CD4-positive, alpha-beta memory T cell (primary cell): ENCODE measurements at regions of chr6 and their contacts with region 1.

Region 1: DNA sequence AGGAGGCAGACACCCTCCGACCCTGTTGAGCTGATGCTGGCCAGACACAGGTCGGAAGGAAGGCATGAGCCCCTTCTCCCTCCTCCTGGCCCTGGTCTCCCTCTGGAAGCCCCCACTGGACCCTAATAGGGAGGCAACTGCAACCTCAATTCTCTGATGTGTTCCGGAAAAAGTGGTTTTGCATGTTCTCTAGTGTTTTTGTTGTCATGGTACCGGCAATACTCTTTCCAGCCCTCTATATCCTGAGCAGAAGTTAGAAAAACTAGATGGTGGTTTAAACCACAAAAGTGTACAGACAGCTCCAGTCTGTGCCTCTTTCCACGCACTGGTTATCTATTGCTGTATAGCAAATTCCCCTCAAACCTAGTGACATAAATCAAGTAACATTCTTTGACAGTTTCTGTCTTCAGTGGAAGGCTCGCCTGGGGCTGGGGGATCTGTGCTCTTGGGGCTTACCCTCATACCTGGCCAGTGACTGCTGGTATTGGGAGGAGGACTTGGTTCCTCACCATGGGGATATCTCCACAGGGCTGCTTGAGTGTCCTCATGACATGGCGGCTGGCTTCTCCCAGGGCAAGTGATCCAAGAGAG is 37.0 kb downstream of the SYTL3 start:
- DNase-seq: peak; percentile 84 to 92 (median 87)
- H3K4me3 ChIP-seq: peak overlapping the region in 1 of 2 donors; percentile 25
- H3K4me3 Mint-ChIP-seq: peak overlapping the region; percentile 53 to 91 (median 80)
- H3K27ac ChIP-seq: peak overlapping the region; percentile 85
- H3K27ac Mint-ChIP-seq: peak overlapping the region; percentile 98 to 100 (median 100)
- H3K4me1 ChIP-seq: peaks cover 65% of the 10 kb centered on the region
- H3K4me1 Mint-ChIP-seq: peaks cover 43 to 77% (median 58%) of the 10 kb centered on the region in 4 donors
- H3K27me3 ChIP-seq: no peaks in the 10 kb centered on the region
- H3K27me3 Mint-ChIP-seq: no peaks in the 10 kb centered on the region

Region 2: GRCh38 chr6:158595223-158595622 is 91.7 kb before region 1 on chr6:
- CTCF ChIA-PET with region 1: interaction called, 12 read pairs
- POLR2A ChIA-PET with region 1: no interaction called
- intact Hi-C with region 1: no loop called
- DNase-seq: peak in 4 of 5 donors; percentile 12 to 26 (median 21)
- H3K4me3 ChIP-seq: no peak overlapping the region
- H3K4me3 Mint-ChIP-seq: no peak overlapping the region
- H3K27ac ChIP-seq: no peak overlapping the region
- H3K27ac Mint-ChIP-seq: peak overlapping the region in 1 of 7 donors; percentile 52
- H3K4me1 ChIP-seq: no peaks in the 10 kb centered on the region
- H3K4me1 Mint-ChIP-seq: peaks cover 0 to 12% (median 2%) of the 10 kb centered on the region in 4 donors
- H3K27me3 ChIP-seq: no peaks in the 10 kb centered on the region
- H3K27me3 Mint-ChIP-seq: no peaks in the 10 kb centered on the region

Region 3: DNA sequence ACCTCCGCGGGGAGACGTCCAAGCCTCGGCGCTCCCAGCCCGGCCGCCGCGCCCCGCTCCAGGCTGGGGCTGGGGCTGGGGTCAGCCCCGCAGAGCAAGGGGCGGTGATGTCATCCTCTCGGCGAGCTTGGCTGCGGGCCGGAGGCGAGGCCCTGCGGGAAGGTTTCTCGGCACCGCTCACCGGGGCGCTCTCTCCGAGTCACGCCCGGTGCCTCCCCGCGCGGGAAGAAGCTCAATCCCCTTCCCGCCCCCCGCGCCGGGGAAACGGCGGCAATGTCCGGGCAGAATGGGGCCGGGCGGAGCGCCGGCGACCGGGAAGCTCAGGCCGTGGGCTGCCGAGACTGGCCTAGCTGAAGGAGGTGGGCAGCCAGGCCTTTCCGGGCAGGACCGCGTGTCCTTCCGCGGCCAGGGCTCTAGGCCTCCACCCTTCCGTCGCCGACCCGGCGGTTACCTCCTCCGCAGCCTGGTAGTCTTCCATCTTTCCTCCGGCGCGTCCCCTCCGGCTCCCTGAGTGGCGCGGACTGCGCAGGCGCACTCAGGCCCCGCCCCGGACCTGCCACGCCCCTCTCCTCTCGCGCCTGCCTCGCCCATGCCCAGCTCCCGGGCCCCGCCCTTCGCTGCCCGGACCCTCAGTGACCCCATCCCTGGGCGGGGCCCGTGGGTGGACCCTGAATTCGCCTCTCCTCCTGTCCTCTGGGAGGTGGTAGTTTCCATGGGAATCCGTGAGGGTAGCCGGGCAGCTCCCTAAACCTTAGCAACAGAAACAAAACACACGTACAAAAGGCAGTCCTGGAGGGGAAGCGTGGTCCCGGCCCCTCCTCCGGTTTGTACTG is 42.4 kb before region 1 on chr6 and contains the start of gene DYNLT1:
- CTCF ChIA-PET with region 1: interaction called, 34 read pairs
- POLR2A ChIA-PET with region 1: interaction called, 28 read pairs
- intact Hi-C with region 1: no loop called
- DNase-seq: peak; percentile 78 to 95 (median 88)
- H3K4me3 ChIP-seq: peak within 1 kb of the TSS; percentile 84 to 85
- H3K4me3 Mint-ChIP-seq: peak within 1 kb of the TSS; percentile 99 to 100 (median 99)
- H3K27ac ChIP-seq: peak within 1 kb of the TSS; percentile 96
- H3K27ac Mint-ChIP-seq: peak within 1 kb of the TSS; percentile 92 to 100 (median 99)
- H3K4me1 ChIP-seq: peaks cover 58% of the 10 kb centered on the region
- H3K4me1 Mint-ChIP-seq: peaks cover 46 to 82% (median 55%) of the 10 kb centered on the region in 4 donors
- H3K27me3 ChIP-seq: no peaks in the 10 kb centered on the region
- H3K27me3 Mint-ChIP-seq: no peaks in the 10 kb centered on the region
- total RNA-seq, gene DYNLT1: 78.8 to 90.4 TPM

Region 4: DNA sequence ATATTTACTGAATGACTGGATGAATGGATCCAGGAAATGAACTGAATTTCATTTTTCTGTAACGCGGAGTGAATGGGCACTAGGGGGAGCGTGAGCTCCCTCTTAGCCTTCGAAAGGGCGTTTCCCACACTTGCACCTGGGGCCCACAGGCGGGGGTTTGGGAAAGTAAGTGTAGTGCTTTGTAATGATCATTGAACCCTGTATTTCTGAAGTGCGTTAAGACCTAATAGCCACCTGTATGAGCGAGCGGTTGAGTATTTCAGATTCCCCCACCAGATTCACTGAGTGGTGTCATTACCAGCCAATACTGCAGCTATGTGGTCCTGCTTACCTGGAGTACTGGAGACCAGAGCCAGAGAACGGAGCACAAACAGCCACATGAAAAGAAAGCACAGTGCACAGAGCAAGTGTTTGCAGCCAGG is 26.5 kb before region 1 on chr6:
- CTCF ChIA-PET with region 1: interaction called, 220 read pairs
- POLR2A ChIA-PET with region 1: interaction called, 34 read pairs
- intact Hi-C with region 1: loop called (anchors 1 kb)
- DNase-seq: peak; percentile 61 to 70 (median 67)
- H3K4me3 ChIP-seq: no peak overlapping the region
- H3K4me3 Mint-ChIP-seq: peak overlapping the region in 6 of 8 donors; percentile 35 to 62 (median 48)
- H3K27ac ChIP-seq: no peak overlapping the region
- H3K27ac Mint-ChIP-seq: peak overlapping the region; percentile 35 to 93 (median 88)
- H3K4me1 ChIP-seq: peaks cover 28% of the 10 kb centered on the region
- H3K4me1 Mint-ChIP-seq: peaks cover 20 to 44% (median 30%) of the 10 kb centered on the region in 4 donors
- H3K27me3 ChIP-seq: no peaks in the 10 kb centered on the region
- H3K27me3 Mint-ChIP-seq: no peaks in the 10 kb centered on the region

Region 5: GRCh38 chr6:158704181-158704822 is 17.4 kb after region 1 on chr6:
- CTCF ChIA-PET with region 1: interaction called, 14 read pairs
- POLR2A ChIA-PET with region 1: interaction called, 4 read pairs
- intact Hi-C with region 1: no loop called
- DNase-seq: peak; percentile 67 to 82 (median 72)
- H3K4me3 ChIP-seq: peak overlapping the region; percentile 39 to 57
- H3K4me3 Mint-ChIP-seq: peak overlapping the region; percentile 82 to 89 (median 83)
- H3K27ac ChIP-seq: no peak overlapping the region
- H3K27ac Mint-ChIP-seq: peak overlapping the region; percentile 41 to 90 (median 79)
- H3K4me1 ChIP-seq: peaks cover 10% of the 10 kb centered on the region
- H3K4me1 Mint-ChIP-seq: peaks cover 9 to 21% (median 15%) of the 10 kb centered on the region in 4 donors
- H3K27me3 ChIP-seq: no peaks in the 10 kb centered on the region
- H3K27me3 Mint-ChIP-seq: no peaks in the 10 kb centered on the region